H1 (cell line): ENCODE measurements at regions of chr4 and their contacts with region 1.

Region 1: GRCh38 chr4:48483006-48483776 is at the start of gene SLC10A4:
- DNase-seq: peak in 1 of 2 experiments; percentile 72
- H3K4me3 ChIP-seq: peak within 1 kb of the TSS; percentile 20 to 59 (median 42)
- H3K27ac ChIP-seq: no peak within 1 kb of the TSS
- H3K4me1 ChIP-seq: peaks cover 4 to 11% (median 6%) of the 10 kb centered on the region in 4 experiments; a peak in 6 of 7 replicates
- H3K27me3 ChIP-seq: peaks cover 18 to 42% (median 36%) of the 10 kb centered on the region in 4 experiments
- CTCF ChIP-seq: no peak
- EP300 ChIP-seq: no peak
- POLR2A ChIP-seq: no peak
- RAD21 ChIP-seq: no peak
- total RNA-seq, gene SLC10A4: 3.6 and 4.5 TPM in 2 replicates

Region 2: DNA sequence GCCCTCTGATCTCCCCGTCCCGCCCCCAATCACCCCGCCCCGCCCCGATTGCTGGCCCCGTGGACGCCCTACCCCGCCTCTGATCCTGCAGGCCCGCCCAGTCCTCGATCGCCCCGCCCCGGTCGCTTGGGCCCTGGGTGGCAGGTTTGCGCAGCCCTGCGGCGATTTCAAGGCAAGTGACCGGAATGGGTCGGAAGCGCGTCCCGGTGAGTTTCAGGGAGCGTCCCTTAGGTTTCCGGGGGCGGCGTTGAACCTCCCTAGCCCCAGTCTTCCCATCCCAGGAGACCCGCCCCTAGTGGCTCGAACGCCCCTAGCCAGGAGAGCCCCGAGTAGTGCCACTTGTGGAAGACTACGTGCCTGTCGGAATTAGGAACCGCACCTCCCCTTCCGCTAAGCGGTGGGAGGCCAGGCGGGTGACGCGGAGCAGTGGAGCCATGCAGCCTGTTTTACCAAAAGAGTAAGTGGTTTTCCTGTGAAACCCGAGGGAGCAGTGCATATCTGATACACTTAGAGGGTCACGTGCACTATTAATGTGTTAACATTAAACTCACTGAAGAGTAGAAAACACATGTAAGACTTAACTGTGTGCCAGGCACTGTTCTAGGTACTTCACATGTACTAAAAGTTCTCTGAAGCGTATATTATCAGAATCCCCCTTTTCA is 213.2 kb before region 1 on chr4:
- CTCF ChIA-PET with region 1: no interaction called
- POLR2A ChIA-PET with region 1: no interaction called
- DNase-seq: peak; percentile 85 to 96
- H3K4me3 ChIP-seq: peak overlapping the region; percentile 58 to 74 (median 69)
- H3K27ac ChIP-seq: no peak overlapping the region; the same call in 1 of the 2 replicates
- H3K4me1 ChIP-seq: peaks cover 0 to 4% (median 0%) of the 10 kb centered on the region in 4 experiments; a peak in 3 of 7 replicates
- H3K27me3 ChIP-seq: no peaks in the 10 kb centered on the region
- CTCF ChIP-seq: peak; percentile 26 to 35 (median 33)
- EP300 ChIP-seq: no peak
- POLR2A ChIP-seq: no peak
- RAD21 ChIP-seq: no peak; a peak in 1 of 4 replicates

Region 3: DNA sequence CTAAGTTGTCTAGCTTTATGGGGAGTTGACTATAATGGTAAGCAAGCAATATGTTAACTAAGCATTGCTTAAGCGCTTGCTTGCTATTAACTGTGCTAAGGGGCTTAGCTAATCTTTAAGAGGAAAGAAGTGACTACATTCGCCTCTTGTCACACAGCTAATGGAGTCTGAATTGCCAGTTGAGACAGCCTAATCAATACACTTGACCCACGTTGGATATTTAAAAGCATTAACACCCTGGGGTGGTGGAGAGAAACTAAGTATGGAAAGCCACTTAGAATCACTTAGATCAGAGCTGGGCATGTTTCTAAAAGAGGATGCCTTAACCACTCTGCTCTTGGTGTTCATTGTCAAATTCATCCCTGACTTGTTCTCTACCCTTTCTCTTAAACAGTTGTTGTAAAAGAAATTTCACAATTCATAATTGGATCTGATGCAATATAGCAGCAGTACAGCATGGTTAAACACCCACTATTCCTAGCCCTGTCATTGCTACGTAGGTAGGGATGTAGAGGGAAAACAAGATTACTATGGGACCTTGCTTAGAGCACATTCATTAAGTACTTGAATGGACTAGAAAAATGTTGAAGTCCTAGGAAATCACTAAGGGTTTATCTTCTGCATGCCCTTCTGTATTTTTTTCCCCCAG is 10.4 kb after region 1 on chr4:
- CTCF ChIA-PET with region 1: interaction called, 3 read pairs
- POLR2A ChIA-PET with region 1: interaction called, 10 read pairs
- DNase-seq: no peak
- H3K4me3 ChIP-seq: no peak overlapping the region
- H3K27ac ChIP-seq: no peak overlapping the region
- H3K4me1 ChIP-seq: peaks cover 0 to 3% (median under 1%) of the 10 kb centered on the region in 4 experiments; a peak in 4 of 7 replicates
- H3K27me3 ChIP-seq: peaks cover 18 to 41% (median 35%) of the 10 kb centered on the region in 4 experiments
- CTCF ChIP-seq: no peak
- EP300 ChIP-seq: no peak
- POLR2A ChIP-seq: no peak
- RAD21 ChIP-seq: no peak